Activated CD8-positive, alpha-beta T cell treated with anti-CD3 and anti-CD28 coated beads for 36 hours (primary cell): ENCODE measurements at regions of chr10 and their contacts with region 1.

Region 1: DNA sequence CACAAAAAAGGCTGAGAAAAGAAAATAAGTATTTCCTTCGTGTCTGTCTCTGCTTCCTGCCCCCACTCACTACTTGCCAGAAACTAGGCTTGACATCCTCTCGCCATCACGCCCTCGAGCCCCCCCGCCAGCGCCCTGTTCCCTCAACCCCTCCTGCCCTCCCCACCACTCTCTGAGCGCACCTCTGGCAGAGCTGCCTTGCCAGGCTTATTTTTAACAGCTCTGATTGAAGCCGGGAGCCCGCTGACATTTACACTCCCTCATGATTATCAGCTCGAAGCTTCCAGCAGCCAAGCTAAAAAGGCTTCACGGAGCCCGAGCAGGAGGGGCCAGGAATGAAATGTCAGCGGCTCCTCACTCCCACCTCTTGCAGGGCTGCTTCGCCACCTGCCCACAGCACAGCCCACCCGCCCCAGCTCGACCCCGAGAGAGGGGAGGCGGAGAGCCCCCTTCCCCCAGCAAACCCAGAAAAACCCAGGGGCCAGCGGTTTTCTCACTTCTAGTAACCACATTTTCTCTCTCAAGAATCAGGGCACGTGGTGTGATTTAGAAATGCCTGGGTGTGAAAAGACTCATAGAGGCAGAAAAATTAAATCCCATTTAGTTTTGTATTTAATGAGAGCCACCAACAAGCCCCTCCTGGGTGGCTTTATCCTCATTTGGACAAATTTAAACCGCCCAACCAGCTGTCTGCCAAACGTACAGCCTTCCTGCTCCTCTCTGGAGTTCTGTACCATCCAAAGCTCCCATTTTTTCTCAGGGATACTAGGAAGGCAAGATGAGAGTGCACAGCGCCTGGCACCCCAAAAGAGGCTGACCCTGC is 89.3 kb downstream of the SLIT1 start:
- DNase-seq: peak; percentile 61
- ATAC-seq: peak; percentile 79
- H3K4me3 Mint-ChIP-seq: no peak overlapping the region
- H3K27ac Mint-ChIP-seq: no peak overlapping the region
- H3K4me1 Mint-ChIP-seq: peaks cover 28% of the 10 kb centered on the region
- H3K27me3 Mint-ChIP-seq: peaks cover 15% of the 10 kb centered on the region
- CTCF ChIP-seq: no peak

Region 2: DNA sequence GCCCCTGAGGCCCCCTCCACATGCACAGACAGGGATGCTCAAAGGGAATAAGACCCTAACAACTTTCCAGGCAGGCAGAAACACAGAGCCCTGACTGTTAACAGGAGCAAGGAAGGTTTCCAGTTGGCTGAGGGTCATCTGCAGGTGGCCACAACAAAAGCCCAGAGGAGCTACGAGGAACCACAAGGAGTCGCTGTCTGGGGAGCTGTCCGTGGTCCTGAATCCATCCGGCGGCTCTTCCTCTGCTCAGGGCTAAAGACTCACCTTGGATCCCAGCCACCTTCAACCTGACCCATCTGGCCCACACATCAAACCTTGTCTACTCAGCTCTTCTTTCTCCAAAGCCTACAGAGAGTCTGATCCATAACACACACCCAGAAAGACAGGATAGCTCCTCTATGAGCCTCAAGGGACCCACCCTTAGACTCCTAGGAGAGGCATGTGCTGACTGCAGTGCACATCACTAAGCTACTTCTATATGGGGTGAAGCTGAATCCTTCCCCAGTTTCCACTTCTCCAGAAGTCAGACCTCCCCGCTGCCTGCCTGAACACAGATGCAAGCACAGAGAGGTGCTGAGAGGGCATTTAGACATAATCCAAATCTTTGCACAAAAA is 14.7 kb before region 1 on chr10:
- CTCF ChIA-PET with region 1: interaction called, 30 read pairs
- POLR2A ChIA-PET with region 1: interaction called, 3 read pairs
- intact Hi-C with region 1: no loop called
- DNase-seq: peak; percentile 71
- ATAC-seq: peak; percentile 74
- H3K4me3 Mint-ChIP-seq: no peak overlapping the region
- H3K27ac Mint-ChIP-seq: no peak overlapping the region
- H3K4me1 Mint-ChIP-seq: no peaks in the 10 kb centered on the region
- H3K27me3 Mint-ChIP-seq: peaks cover 28% of the 10 kb centered on the region
- CTCF ChIP-seq: peak; percentile 66